Left ventricle myocardium inferior (tissue), 1 donor: ENCODE measurements at regions of chr17 and their contacts with region 1.

Region 1: GRCh38 chr17:55664287-55664686 is 58.4 kb downstream of the TMEM100 start:
- DNase-seq: no peak
- H3K4me3 ChIP-seq: no peak overlapping the region
- H3K27ac ChIP-seq: no peak overlapping the region
- H3K4me1 ChIP-seq: peaks cover 15% of the 10 kb centered on the region
- H3K27me3 ChIP-seq: peaks cover 6% of the 10 kb centered on the region
- CTCF ChIP-seq: no peak

Region 2: GRCh38 chr17:55238179-55238930 is 425.9 kb before region 1 on chr17:
- intact Hi-C with region 1: no loop called
- DNase-seq: peak; percentile 93
- H3K4me3 ChIP-seq: peak overlapping the region; percentile 67
- H3K27ac ChIP-seq: peak overlapping the region; percentile 83
- H3K4me1 ChIP-seq: peaks cover 20% of the 10 kb centered on the region
- H3K27me3 ChIP-seq: peaks cover under 1% of the 10 kb centered on the region
- CTCF ChIP-seq: peak; percentile 27

Region 3: DNA sequence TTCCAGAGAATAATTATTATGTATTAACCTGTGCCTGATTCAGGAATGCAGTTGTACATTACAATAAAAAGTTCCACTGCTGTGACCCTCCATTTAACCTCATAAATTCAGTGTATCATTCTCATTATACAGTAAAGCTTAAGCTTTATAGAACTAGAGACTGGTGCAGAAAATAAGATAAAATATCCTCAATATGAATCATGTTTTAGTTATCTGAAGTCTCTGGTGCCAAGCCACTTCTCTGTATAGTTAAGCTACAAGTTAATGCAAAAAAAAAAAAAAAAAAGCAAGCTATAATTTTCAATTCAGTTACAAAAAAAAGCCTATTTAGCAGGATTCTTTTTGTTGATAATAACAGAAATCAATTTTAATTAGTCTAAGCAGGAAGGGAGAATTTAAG is 130.7 kb before region 1 on chr17:
- intact Hi-C with region 1: no loop called
- DNase-seq: no peak
- H3K4me3 ChIP-seq: no peak overlapping the region
- H3K27ac ChIP-seq: no peak overlapping the region
- H3K4me1 ChIP-seq: no peaks in the 10 kb centered on the region
- H3K27me3 ChIP-seq: peaks cover 6% of the 10 kb centered on the region
- CTCF ChIP-seq: no peak

Region 4: GRCh38 chr17:55601874-55602364 is 62.4 kb before region 1 on chr17:
- intact Hi-C with region 1: loop called (anchors 10 kb)
- DNase-seq: no peak
- H3K4me3 ChIP-seq: no peak overlapping the region
- H3K27ac ChIP-seq: no peak overlapping the region
- H3K4me1 ChIP-seq: no peaks in the 10 kb centered on the region
- H3K27me3 ChIP-seq: no peaks in the 10 kb centered on the region
- CTCF ChIP-seq: peak; percentile 61